Activated CD4-positive, alpha-beta T cell treated with anti-CD3 and anti-CD28 coated beads for 36 hours (primary cell): ENCODE measurements at regions of chr18 and their contacts with region 1.

Region 1: DNA sequence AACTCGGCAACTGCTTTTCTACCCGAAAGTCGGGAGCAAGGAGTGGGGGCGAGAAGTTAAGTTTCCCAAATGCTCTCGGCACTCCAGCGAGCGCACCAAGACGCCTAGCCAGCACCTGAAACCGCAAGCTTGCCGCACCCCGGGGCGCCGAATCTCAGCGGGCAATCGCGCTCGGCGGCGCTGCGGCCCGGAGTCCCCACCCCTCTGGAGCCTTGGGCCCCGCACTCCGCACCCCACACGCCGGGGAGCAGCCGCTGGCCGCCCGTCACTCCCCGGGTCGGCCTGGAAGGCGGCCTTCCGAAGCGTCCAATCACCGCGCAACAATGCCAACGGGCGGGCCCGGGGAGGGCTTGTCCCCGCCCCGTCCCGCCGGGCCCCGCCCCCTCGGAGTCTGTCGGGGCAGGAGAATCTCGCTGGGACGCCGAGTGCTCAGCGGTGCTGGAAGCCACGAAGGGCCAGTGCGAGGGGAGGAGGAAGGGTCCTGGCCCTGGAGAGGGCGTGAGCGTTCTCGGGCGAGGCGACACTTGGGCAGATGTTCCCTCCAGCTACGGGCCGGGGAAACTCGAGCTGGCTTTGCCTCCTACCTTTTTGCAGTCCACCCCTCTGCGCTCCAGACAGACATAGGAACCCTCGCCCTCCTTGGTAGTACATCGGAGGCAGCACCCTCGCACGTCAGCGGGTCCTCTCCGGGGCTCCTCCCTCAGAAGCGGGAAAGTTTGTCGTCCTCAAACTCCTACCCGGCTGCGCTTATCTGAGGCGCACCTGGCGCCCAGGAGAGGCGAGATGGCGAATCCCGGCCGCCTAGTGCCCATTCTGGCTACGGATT is 1.1 kb upstream of the ZBTB7C start:
- DNase-seq: peak; percentile 88
- ATAC-seq: peak; percentile 97
- H3K4me3 Mint-ChIP-seq: peak overlapping the region; percentile 48
- H3K27ac Mint-ChIP-seq: no peak overlapping the region
- H3K4me1 Mint-ChIP-seq: peaks cover 12% of the 10 kb centered on the region
- H3K27me3 Mint-ChIP-seq: peaks cover 67% of the 10 kb centered on the region

Region 2: DNA sequence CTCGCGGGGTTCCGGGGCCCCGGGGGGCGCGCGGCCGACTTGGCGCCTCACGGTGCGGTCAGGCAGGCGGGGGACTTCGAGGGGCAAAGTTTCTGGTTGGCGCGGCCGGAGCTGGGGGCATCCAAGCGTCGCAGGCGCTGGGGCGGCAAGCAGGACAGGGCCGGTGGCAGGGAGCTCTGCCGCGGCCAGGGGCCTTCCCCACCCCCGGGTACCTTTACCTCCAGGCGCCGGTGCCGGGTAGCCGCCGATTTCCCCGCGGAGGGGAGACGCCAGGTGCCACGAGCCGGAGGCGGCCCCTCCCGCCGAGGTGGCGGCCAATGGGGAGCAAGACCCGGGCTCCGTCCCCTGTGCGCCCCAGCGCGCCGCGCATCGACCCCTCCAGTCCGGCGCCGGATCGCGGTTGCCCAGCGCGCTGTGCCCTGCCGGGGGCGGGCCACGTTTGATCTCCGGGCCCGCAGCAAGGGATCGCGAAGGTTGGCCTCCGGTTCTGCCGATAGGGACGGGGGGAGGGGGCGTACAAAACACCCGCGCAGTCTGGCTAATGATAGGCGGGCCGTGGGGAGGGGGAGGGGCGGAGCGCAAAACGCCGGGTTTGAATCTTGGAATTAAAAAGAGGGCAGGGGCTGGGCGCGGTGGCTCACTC is 1653.6 kb before region 1 on chr18 and contains the start of gene ST8SIA5:
- CTCF ChIA-PET with region 1: no interaction called
- POLR2A ChIA-PET with region 1: no interaction called
- intact Hi-C with region 1: loop called in 1 of 2 experiments (anchors 5 kb)
- DNase-seq: peak; percentile 37
- ATAC-seq: peak; percentile 30
- H3K4me3 Mint-ChIP-seq: peak within 1 kb of the TSS; percentile 53
- H3K27ac Mint-ChIP-seq: no peak within 1 kb of the TSS
- H3K4me1 Mint-ChIP-seq: peaks cover 6% of the 10 kb centered on the region
- H3K27me3 Mint-ChIP-seq: peaks cover 54% of the 10 kb centered on the region
- total RNA-seq, gene ST8SIA5: not detected

Region 3: GRCh38 chr18:48161191-48161910 is 249.0 kb before region 1 on chr18:
- CTCF ChIA-PET with region 1: no interaction called
- POLR2A ChIA-PET with region 1: no interaction called
- intact Hi-C with region 1: loop called in 1 of 2 experiments (anchors 1 kb)
- DNase-seq: peak; percentile 83
- ATAC-seq: peak; percentile 97
- H3K4me3 Mint-ChIP-seq: peak overlapping the region; percentile 48
- H3K27ac Mint-ChIP-seq: no peak overlapping the region
- H3K4me1 Mint-ChIP-seq: no peaks in the 10 kb centered on the region
- H3K27me3 Mint-ChIP-seq: peaks cover 5% of the 10 kb centered on the region

Region 4: GRCh38 chr18:48538531-48539405 is 128.5 kb after region 1 on chr18 and contains the start of gene CTIF:
- CTCF ChIA-PET with region 1: no interaction called
- POLR2A ChIA-PET with region 1: no interaction called
- intact Hi-C with region 1: loop called in 1 of 2 experiments (anchors 1 kb)
- DNase-seq: peak; percentile 86
- ATAC-seq: peak; percentile 86
- H3K4me3 Mint-ChIP-seq: peak within 1 kb of the TSS; percentile 78
- H3K27ac Mint-ChIP-seq: no peak within 1 kb of the TSS
- H3K4me1 Mint-ChIP-seq: peaks cover 15% of the 10 kb centered on the region
- H3K27me3 Mint-ChIP-seq: peaks cover 8% of the 10 kb centered on the region
- total RNA-seq, gene CTIF: 4.5 to 5.3 TPM